Activated CD4-positive, alpha-beta T cell treated with anti-CD3 and anti-CD28 coated beads for 36 hours (primary cell): ENCODE measurements at regions of chr4 and their contacts with region 1.

Region 1: DNA sequence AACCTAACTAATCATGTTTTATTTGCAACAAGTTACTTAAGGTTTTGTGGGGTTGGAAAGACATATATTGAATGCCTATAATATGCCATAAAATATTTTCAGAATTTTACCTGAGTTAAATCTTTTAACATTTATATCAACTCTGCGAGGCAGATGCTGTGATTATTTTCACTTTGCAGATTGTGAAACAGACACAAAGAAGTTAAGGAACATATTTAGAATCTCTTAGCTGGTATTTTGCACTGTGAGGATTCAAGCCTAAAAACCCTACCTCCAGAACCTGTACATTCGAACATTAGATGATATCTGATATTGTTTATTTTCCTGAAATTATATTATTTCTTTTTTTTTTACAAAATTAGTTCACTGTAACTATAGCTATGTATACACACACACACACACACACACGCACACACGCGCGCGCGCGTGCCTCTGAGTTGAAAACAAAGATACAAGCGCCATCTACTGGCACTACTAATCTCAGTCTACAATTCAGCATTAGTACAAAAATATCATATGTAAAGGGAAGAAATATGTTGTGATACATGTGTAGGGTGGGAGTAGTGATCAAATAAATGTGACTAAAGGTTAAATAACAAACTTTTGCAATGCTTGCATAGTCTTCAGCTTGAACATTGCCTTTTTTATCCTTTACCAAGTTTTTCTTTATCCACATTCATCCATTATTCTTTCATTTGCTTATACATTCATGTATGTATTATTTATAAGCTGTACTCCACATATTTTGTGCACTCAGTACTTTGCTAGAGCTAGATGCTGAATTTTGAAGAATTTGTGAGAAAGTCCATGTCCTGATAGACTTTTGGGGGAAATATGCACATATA is 61.5 kb downstream of the ANXA10 start:
- DNase-seq: peak; percentile 69
- ATAC-seq: peak; percentile 75
- H3K4me3 Mint-ChIP-seq: no peak overlapping the region
- H3K27ac Mint-ChIP-seq: no peak overlapping the region
- H3K4me1 Mint-ChIP-seq: peaks cover 5% of the 10 kb centered on the region
- H3K27me3 Mint-ChIP-seq: no peaks in the 10 kb centered on the region

Region 2: DNA sequence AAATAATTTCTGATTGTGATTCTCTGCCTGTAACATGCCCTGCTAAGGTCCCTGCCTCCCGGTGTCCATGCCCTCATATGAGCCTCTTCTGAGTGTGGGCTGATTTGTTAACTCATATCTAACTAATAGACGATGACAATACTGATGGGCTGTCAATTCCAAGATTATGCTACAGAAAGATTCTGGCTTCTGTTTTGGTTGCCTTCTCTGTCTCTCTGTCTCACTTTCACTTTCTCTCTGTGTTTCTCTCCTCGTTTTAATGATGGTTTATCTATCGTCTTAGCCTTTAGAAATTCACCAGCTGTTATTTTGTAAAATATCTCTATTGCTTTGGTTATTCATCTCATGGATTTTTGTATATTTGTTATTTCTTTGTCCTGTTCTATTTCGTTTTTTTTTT is 374.0 kb before region 1 on chr4:
- CTCF ChIA-PET with region 1: no interaction called
- POLR2A ChIA-PET with region 1: no interaction called
- intact Hi-C with region 1: loop called in 1 of 2 experiments (anchors 10 kb)
- DNase-seq: no peak
- ATAC-seq: no peak
- H3K4me3 Mint-ChIP-seq: no peak overlapping the region
- H3K27ac Mint-ChIP-seq: no peak overlapping the region
- H3K4me1 Mint-ChIP-seq: no peaks in the 10 kb centered on the region
- H3K27me3 Mint-ChIP-seq: no peaks in the 10 kb centered on the region